ENCODE measurements at regions of chr22 and their contacts with region 1.

Region 1: GRCh38 chr22:20885557-20886323 is 26.9 kb downstream of the SNAP29 start:
- DNase-seq: peak in 3 of 5 donors; percentile 9 to 15 (median 10)
- H3K4me3 ChIP-seq: no peak overlapping the region
- H3K4me3 Mint-ChIP-seq: no peak overlapping the region
- H3K27ac ChIP-seq: no peak overlapping the region
- H3K27ac Mint-ChIP-seq: peak overlapping the region in 1 of 7 donors; percentile 11
- H3K4me1 ChIP-seq: no peaks in the 10 kb centered on the region
- H3K4me1 Mint-ChIP-seq: peaks cover 0 to 1% (median 0%) of the 10 kb centered on the region in 4 donors
- H3K27me3 ChIP-seq: no peaks in the 10 kb centered on the region
- H3K27me3 Mint-ChIP-seq: no peaks in the 10 kb centered on the region

Region 2: DNA sequence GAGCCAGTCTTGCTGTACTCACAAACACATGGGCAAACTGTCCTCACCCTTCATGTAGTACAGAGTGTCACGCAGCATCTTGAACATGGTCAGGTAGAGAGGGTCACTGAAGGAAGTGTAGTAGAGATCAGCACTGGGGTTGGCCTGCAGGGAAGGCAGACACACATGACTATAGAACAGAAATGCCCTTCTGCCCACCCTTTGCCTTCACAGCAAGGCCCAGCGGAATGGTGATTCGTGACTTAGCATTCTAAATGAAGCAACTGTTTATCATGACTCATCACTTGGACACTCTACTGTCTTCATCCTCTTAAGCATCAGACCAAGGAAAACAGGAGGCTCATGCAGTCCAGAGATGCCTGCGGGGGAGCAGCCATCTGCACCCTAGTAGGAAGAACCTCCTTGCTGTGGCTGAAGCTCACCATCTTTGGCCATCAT is 78.4 kb before region 1 on chr22:
- CTCF ChIA-PET with region 1: no interaction called
- POLR2A ChIA-PET with region 1: no interaction called
- intact Hi-C with region 1: no loop called
- DNase-seq: no peak
- H3K4me3 ChIP-seq: no peak overlapping the region
- H3K4me3 Mint-ChIP-seq: no peak overlapping the region
- H3K27ac ChIP-seq: no peak overlapping the region
- H3K27ac Mint-ChIP-seq: no peak overlapping the region
- H3K4me1 ChIP-seq: peaks cover 4% of the 10 kb centered on the region
- H3K4me1 Mint-ChIP-seq: peaks cover 0 to 2% (median 0%) of the 10 kb centered on the region in 4 donors
- H3K27me3 ChIP-seq: no peaks in the 10 kb centered on the region
- H3K27me3 Mint-ChIP-seq: no peaks in the 10 kb centered on the region

Region 3: GRCh38 chr22:20946080-20946986 is 60.6 kb after region 1 on chr22:
- CTCF ChIA-PET with region 1: interaction called, 3 read pairs
- POLR2A ChIA-PET with region 1: no interaction called
- intact Hi-C with region 1: loop called (anchors 10 kb)
- DNase-seq: no peak
- H3K4me3 ChIP-seq: no peak overlapping the region
- H3K4me3 Mint-ChIP-seq: no peak overlapping the region
- H3K27ac ChIP-seq: no peak overlapping the region
- H3K27ac Mint-ChIP-seq: peak overlapping the region in 4 of 7 donors; percentile 8 to 49 (median 44)
- H3K4me1 ChIP-seq: peaks cover 59% of the 10 kb centered on the region
- H3K4me1 Mint-ChIP-seq: peaks cover 43 to 75% (median 61%) of the 10 kb centered on the region in 4 donors
- H3K27me3 ChIP-seq: no peaks in the 10 kb centered on the region
- H3K27me3 Mint-ChIP-seq: no peaks in the 10 kb centered on the region

Measured in CD4-positive, alpha-beta memory T cell (primary cell).